ENCODE measurements at regions of chr2 and their contacts with region 1.

Region 1: GRCh38 chr2:148020111-148021058 is at the start of gene ORC4:
- DNase-seq: peak; percentile 94 to 99 (median 97)
- H3K4me3 ChIP-seq: peak within 1 kb of the TSS; percentile 87 to 93
- H3K4me3 Mint-ChIP-seq: peak within 1 kb of the TSS; percentile 92 to 100 (median 99)
- H3K27ac ChIP-seq: peak within 1 kb of the TSS; percentile 89
- H3K27ac Mint-ChIP-seq: peak within 1 kb of the TSS; percentile 85 to 98 (median 97)
- H3K4me1 ChIP-seq: peaks cover 57% of the 10 kb centered on the region
- H3K4me1 Mint-ChIP-seq: peaks cover 44 to 83% (median 63%) of the 10 kb centered on the region in 4 donors
- H3K27me3 ChIP-seq: no peaks in the 10 kb centered on the region
- H3K27me3 Mint-ChIP-seq: no peaks in the 10 kb centered on the region
- total RNA-seq, gene ORC4: 59.4 to 60.1 TPM

Region 2: DNA sequence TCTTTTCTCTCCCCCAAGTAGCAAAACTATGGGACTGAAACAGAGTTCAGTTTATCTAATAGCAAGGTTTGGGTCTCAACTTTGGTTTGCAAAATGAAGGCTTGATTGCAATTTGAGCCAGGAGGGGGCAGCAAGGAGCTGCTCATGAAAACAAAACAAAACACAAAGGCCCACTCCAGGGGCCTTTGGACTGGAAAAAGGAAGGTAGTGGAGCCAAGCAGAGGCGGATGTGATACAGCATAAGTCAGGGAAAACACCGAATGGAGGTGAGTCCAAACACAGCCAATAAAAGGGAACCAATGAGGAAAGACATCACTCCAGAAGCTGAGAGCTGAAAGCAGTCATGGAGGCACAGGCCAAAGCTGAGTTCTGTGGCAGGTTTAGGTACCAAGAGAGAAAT is 975.3 kb before region 1 on chr2:
- CTCF ChIA-PET with region 1: no interaction called
- POLR2A ChIA-PET with region 1: no interaction called
- intact Hi-C with region 1: no loop called
- DNase-seq: peak; percentile 8 to 37 (median 33)
- H3K4me3 ChIP-seq: no peak overlapping the region
- H3K4me3 Mint-ChIP-seq: no peak overlapping the region
- H3K27ac ChIP-seq: no peak overlapping the region
- H3K27ac Mint-ChIP-seq: peak overlapping the region in 3 of 7 donors; percentile 4 to 85 (median 74)
- H3K4me1 ChIP-seq: no peaks in the 10 kb centered on the region
- H3K4me1 Mint-ChIP-seq: peaks cover 0 to 5% (median under 1%) of the 10 kb centered on the region in 4 donors
- H3K27me3 ChIP-seq: no peaks in the 10 kb centered on the region
- H3K27me3 Mint-ChIP-seq: no peaks in the 10 kb centered on the region

Region 3: DNA sequence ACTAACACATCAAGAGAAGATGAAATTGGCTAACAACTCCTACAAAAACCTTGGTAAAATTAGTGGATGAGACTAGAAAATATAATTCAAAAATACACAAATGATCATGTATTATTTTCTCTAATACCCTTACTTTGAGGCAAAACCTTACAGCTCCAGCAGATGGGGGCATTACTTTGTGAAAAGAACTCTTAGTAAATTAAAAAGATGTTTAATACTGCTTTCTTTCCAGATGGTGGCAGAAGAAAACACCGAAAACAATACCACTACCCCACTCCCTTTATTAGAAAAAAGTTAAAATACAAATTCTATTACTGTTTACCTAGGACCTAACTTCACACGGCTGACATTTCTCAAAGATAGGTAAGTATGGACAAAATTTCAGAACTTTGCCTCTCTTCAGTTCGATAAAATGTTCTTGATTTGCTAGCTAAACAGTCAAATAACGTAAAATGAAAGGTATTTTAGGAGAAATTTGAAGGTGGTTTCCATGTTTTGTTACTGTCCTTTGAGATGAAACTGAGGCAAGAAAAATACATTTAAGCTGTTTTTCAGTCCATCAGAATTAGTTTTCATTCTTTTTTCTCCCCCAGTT is 30.5 kb before region 1 on chr2:
- CTCF ChIA-PET with region 1: interaction called, 15 read pairs
- POLR2A ChIA-PET with region 1: interaction called, 7 read pairs
- intact Hi-C with region 1: loop called (anchors 1 kb)
- DNase-seq: peak; percentile 45 to 61 (median 58)
- H3K4me3 ChIP-seq: no peak overlapping the region
- H3K4me3 Mint-ChIP-seq: no peak overlapping the region
- H3K27ac ChIP-seq: no peak overlapping the region
- H3K27ac Mint-ChIP-seq: peak overlapping the region in 3 of 7 donors; percentile 7 to 72 (median 53)
- H3K4me1 ChIP-seq: no peaks in the 10 kb centered on the region
- H3K4me1 Mint-ChIP-seq: peaks cover 14 to 29% (median 19%) of the 10 kb centered on the region in 4 donors
- H3K27me3 ChIP-seq: no peaks in the 10 kb centered on the region
- H3K27me3 Mint-ChIP-seq: no peaks in the 10 kb centered on the region

Region 4: DNA sequence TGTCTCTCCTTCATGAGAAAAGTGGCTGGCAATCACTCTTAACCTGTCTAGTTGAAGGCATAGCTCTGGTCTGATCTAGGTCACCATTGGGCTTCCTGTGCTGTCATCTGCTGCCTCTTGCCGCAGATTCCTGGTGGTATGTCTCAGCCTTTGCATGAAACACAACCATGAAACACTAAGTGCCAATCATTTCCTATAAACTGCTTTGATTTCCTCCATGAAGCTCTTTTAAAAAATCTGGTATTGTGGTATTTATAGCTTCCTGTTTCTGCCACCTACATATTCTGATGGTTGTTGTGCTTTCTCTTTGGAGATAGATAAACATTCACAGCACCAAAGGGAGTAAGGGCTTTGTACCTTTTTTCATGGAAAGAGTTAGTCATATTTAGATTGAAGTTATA is 504.1 kb after region 1 on chr2:
- CTCF ChIA-PET with region 1: interaction called, 4 read pairs
- POLR2A ChIA-PET with region 1: interaction called, 23 read pairs
- intact Hi-C with region 1: loop called (anchors 5 kb)
- DNase-seq: peak; percentile 79 to 90 (median 87)
- H3K4me3 ChIP-seq: peak overlapping the region in 1 of 2 donors; percentile 26
- H3K4me3 Mint-ChIP-seq: peak overlapping the region; percentile 22 to 89 (median 72)
- H3K27ac ChIP-seq: peak overlapping the region; percentile 60
- H3K27ac Mint-ChIP-seq: peak overlapping the region; percentile 85 to 99 (median 95)
- H3K4me1 ChIP-seq: peaks cover 92% of the 10 kb centered on the region
- H3K4me1 Mint-ChIP-seq: peaks cover 74 to 90% (median 84%) of the 10 kb centered on the region in 4 donors
- H3K27me3 ChIP-seq: no peaks in the 10 kb centered on the region
- H3K27me3 Mint-ChIP-seq: no peaks in the 10 kb centered on the region

Region 5: DNA sequence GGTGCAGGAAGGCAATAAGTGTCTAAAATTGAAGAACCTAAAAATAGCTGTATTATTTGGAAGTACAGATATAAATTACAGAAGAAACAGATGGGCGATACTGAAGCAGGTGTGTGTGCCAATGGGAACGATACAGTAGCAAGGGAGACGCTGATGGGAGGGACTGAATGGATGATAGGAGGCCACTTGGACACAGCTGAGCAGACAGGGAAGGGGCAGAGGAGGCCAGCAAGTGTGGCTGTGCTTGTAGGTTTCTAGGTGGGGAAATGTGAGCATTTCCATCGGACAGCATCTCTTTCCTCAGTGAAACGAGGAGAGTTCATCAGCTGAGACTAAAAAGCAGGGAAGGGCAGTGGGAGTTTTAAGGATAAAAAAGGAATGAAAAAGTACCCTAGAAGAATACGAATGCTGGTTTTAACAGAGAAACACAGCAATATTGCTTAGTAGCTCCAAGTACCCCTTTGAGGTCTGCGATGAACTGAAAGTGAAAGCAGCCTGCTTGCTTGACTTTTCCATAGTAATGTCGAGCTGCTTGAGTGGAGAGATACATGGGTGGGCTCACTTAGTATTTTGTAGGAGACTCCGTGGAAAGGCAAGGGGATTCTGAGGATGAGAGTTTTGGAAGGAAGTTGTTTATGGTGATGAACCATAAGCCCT is 532.4 kb after region 1 on chr2:
- CTCF ChIA-PET with region 1: no interaction called
- POLR2A ChIA-PET with region 1: interaction called, 13 read pairs
- intact Hi-C with region 1: loop called (anchors 2 kb)
- DNase-seq: peak; percentile 43 to 58 (median 54)
- H3K4me3 ChIP-seq: peak overlapping the region; percentile 62 to 67
- H3K4me3 Mint-ChIP-seq: no peak overlapping the region
- H3K27ac ChIP-seq: peak overlapping the region; percentile 61
- H3K27ac Mint-ChIP-seq: no peak overlapping the region
- H3K4me1 ChIP-seq: peaks cover 17% of the 10 kb centered on the region
- H3K4me1 Mint-ChIP-seq: peaks cover 0 to 5% (median 3%) of the 10 kb centered on the region in 4 donors
- H3K27me3 ChIP-seq: no peaks in the 10 kb centered on the region
- H3K27me3 Mint-ChIP-seq: no peaks in the 10 kb centered on the region

Region 6: DNA sequence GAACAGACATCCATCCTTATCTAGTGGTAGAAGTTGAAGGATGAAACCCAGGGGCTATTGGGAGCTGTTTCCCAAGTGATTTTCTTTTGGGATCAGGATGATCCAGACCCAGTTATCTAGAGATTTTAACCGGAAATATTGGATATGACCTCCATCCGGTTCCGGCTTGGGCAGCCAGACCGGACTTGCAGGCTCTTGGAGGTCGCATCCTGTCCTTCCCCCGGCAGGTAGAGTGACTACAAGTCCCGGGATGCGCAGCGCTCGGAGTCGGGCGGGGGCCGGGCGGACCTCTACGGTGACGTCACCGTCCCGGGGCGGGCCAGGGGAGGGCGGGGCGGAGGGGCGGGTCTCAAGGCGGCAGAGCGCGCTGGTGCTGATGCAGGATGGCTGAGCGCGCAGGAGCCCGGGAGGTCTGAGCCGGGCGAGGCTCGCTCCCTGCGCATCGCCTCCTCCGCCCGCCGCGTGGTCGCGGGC is 854.5 kb after region 1 on chr2 and contains the start of gene KIF5C:
- CTCF ChIA-PET with region 1: no interaction called
- POLR2A ChIA-PET with region 1: interaction called, 6 read pairs
- intact Hi-C with region 1: loop called (anchors 1 kb)
- DNase-seq: peak; percentile 78 to 83 (median 81)
- H3K4me3 ChIP-seq: peak within 1 kb of the TSS; percentile 54 to 70
- H3K4me3 Mint-ChIP-seq: peak within 1 kb of the TSS; percentile 90 to 97 (median 92)
- H3K27ac ChIP-seq: peak within 1 kb of the TSS; percentile 47
- H3K27ac Mint-ChIP-seq: peak within 1 kb of the TSS; percentile 78 to 97 (median 92)
- H3K4me1 ChIP-seq: peaks cover 8% of the 10 kb centered on the region
- H3K4me1 Mint-ChIP-seq: peaks cover 6 to 20% (median 15%) of the 10 kb centered on the region in 4 donors
- H3K27me3 ChIP-seq: no peaks in the 10 kb centered on the region
- H3K27me3 Mint-ChIP-seq: peaks cover 6 to 10% of the 10 kb centered on the region in 2 donors
- total RNA-seq, gene KIF5C: 21.1 to 21.3 TPM

Region 7: GRCh38 chr2:149587220-149587949 is 1567.0 kb after region 1 on chr2 and contains the start of gene MMADHC:
- CTCF ChIA-PET with region 1: interaction called, 3 read pairs
- POLR2A ChIA-PET with region 1: interaction called, 5 read pairs
- intact Hi-C with region 1: loop called (anchors 1 kb)
- DNase-seq: peak; percentile 90 to 93 (median 93)
- H3K4me3 ChIP-seq: peak within 1 kb of the TSS; percentile 90 to 91
- H3K4me3 Mint-ChIP-seq: peak within 1 kb of the TSS; percentile 93 to 100 (median 98)
- H3K27ac ChIP-seq: peak within 1 kb of the TSS; percentile 98
- H3K27ac Mint-ChIP-seq: peak within 1 kb of the TSS; percentile 96 to 100 (median 99)
- H3K4me1 ChIP-seq: peaks cover 40% of the 10 kb centered on the region
- H3K4me1 Mint-ChIP-seq: peaks cover 22 to 55% (median 42%) of the 10 kb centered on the region in 4 donors
- H3K27me3 ChIP-seq: no peaks in the 10 kb centered on the region
- H3K27me3 Mint-ChIP-seq: peaks cover 3 to 17% of the 10 kb centered on the region in 2 donors
- total RNA-seq, gene MMADHC: 66.4 to 69.4 TPM